ENCODE measurements at regions of chr12 and their contacts with region 1.

Region 1: DNA sequence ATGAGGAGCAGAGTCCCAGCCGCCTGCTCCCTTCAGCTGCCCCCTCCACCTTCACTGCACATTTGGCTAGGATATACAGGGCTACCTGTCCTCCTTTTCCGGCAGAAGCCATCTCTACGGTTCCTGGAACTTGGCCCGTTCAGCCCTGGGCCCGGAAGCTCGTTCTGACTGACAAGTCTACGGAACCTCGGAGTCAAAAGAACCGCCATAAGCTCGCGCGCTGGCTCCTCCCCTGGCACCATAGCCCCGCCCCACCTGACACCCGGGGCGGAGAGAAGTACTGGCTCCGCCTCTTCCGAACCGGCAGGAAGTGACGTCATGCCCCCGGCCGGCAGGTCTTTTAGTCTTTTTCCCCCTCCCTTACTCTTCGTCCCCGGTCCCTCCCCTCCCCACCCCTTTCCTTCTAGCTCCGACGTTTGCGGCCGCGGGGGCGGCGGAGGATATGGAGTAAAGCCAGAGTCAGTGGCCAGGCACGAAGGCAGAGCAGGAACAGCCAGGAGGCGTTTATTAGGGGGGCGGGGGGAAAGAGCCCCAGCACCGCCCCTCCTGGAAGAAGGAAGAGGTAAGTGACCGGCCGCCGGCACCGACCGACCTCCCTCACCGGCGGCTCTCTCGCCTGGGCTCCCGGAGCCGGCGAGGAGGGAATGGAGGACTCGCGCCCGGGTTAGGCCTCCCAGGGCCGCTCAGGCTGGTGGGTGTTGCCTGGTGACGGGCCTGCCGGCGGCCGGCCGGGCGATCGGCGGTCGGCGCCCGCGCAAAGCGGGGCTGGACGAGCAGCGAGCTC is at the starts of genes DEPDC4 and SCYL2:
- DNase-seq: peak; percentile 93 to 95
- ATAC-seq: peak; percentile 94
- H3K4me3 ChIP-seq: peak within 1 kb of the TSS; percentile 84 to 98 (median 86)
- H3K27ac ChIP-seq: peak within 1 kb of the TSS; percentile 91 to 96 (median 95)
- H3K4me1 ChIP-seq: peaks cover 24% of the 10 kb centered on the region in 2 donors
- H3K27me3 ChIP-seq: no peaks in the 10 kb centered on the region
- CTCF ChIP-seq: peak in 1 of 5 experiments; percentile 28
- POLR2A ChIP-seq: peak; percentile 61 to 76
- total RNA-seq, gene DEPDC4: not detected
- total RNA-seq, gene SCYL2: 28.9 to 44.9 (median 33.3) TPM

Region 2: GRCh38 chr12:99553459-99553858 is 713.6 kb before region 1 on chr12:
- in situ Hi-C with region 1: no loop called
- intact Hi-C with region 1: no loop called
- DNase-seq: no peak
- ATAC-seq: no peak
- H3K4me3 ChIP-seq: no peak overlapping the region
- H3K27ac ChIP-seq: no peak overlapping the region
- H3K4me1 ChIP-seq: no peaks in the 10 kb centered on the region
- H3K27me3 ChIP-seq: no peaks in the 10 kb centered on the region
- CTCF ChIP-seq: no peak
- POLR2A ChIP-seq: no peak

Region 3: DNA sequence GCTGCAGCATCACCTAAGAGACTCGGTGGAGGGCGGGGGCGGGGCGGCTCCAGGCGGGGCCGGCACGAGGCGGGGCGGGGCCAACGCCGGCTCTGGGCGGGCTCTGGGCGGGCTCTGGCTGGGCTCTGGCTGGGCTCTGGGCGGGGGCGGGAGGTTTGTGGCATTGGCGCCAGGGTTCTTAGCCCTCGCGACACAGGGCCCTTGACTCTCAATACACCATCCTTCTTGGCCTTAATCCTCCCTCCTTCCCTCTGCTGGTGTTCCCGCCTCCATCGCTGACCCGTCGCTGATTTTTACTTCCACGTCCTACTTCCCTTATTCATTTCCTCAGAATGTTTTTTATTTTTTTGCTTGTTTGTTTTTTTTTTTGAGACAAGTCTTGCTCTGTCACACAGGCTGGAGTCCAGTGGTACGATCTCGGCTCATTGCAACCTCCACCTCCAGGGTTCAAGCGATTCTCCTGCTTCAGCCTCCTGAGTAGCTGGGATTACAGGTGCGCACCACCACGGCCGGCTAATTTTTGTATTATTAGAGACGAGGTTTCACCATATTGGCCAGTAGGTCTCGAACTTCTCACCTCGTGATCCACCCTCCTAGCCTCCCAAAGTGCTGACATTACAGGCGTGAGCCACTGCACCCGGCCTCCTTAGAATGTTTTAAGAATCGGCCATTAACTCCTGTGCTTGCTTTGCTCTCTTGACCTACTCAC is 124.0 kb before region 1 on chr12 and contains the start of gene BLTP3B:
- in situ Hi-C with region 1: no loop called
- intact Hi-C with region 1: loop called (anchors 1 kb)
- DNase-seq: peak; percentile 84 to 88
- ATAC-seq: peak; percentile 77 to 80
- H3K4me3 ChIP-seq: peak within 1 kb of the TSS; percentile 95 to 97 (median 96)
- H3K27ac ChIP-seq: peak within 1 kb of the TSS; percentile 96 to 98 (median 98)
- H3K4me1 ChIP-seq: peaks cover 12 to 31% of the 10 kb centered on the region in 2 donors
- H3K27me3 ChIP-seq: no peaks in the 10 kb centered on the region
- CTCF ChIP-seq: no peak
- POLR2A ChIP-seq: no peak
- total RNA-seq, gene BLTP3B: 33.6 to 71.3 (median 42.5) TPM

Region 4: DNA sequence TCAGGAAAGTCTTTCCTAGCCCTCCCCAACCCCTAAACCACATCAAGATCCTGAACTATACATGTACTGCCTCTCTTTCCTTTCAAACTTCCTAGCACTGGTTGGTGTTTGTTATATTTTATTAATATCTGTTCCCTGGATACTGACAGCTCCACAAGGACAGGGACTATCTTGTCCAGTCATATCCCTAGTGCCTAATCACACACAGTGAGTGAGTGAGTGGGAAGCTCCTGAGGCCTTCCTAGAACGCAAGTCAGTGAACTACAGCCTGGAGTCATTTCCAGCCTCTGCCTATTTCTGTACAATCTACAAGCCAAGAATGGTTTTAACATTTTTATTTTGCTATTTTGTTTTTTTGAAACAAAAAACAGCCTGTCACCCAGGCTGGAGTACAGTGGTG is 73.9 kb before region 1 on chr12:
- in situ Hi-C with region 1: no loop called
- intact Hi-C with region 1: no loop called
- DNase-seq: no peak
- ATAC-seq: no peak
- H3K4me3 ChIP-seq: no peak overlapping the region
- H3K27ac ChIP-seq: no peak overlapping the region
- H3K4me1 ChIP-seq: no peaks in the 10 kb centered on the region
- H3K27me3 ChIP-seq: no peaks in the 10 kb centered on the region
- CTCF ChIP-seq: no peak
- POLR2A ChIP-seq: no peak

Region 5: DNA sequence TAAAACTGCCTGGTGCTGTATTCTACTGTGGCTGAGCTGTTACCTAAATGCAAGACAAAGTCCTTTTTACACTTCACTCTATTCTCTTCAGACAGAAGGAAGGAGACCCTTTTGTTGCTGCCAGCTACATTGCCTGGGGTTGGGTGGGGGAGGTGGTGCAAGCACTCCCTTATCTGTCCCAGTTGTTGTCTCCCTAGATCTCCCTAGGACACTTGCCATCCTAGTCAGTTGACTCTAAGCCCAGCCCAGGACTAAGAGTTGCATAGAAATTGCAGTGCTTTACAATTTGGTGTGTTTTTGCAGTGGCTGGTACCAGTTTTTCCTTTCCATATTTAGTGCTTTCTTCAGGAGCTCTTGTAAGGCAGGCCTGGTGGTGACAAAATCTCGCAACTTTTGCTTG is 35.1 kb after region 1 on chr12:
- in situ Hi-C with region 1: no loop called
- intact Hi-C with region 1: no loop called
- DNase-seq: no peak
- ATAC-seq: no peak
- H3K4me3 ChIP-seq: no peak overlapping the region
- H3K27ac ChIP-seq: no peak overlapping the region
- H3K4me1 ChIP-seq: no peaks in the 10 kb centered on the region
- H3K27me3 ChIP-seq: no peaks in the 10 kb centered on the region
- CTCF ChIP-seq: no peak
- POLR2A ChIP-seq: no peak

Region 6: GRCh38 chr12:100329800-100330199 is 62.8 kb after region 1 on chr12:
- in situ Hi-C with region 1: no loop called
- intact Hi-C with region 1: no loop called
- DNase-seq: no peak
- ATAC-seq: no peak
- H3K4me3 ChIP-seq: no peak overlapping the region
- H3K27ac ChIP-seq: no peak overlapping the region
- H3K4me1 ChIP-seq: peaks cover 0 to 5% of the 10 kb centered on the region in 2 donors
- H3K27me3 ChIP-seq: no peaks in the 10 kb centered on the region
- CTCF ChIP-seq: no peak
- POLR2A ChIP-seq: no peak

Region 7: GRCh38 chr12:100573292-100574186 is 306.5 kb after region 1 on chr12 and contains the start of gene GAS2L3:
- in situ Hi-C with region 1: no loop called
- intact Hi-C with region 1: loop called (anchors 10 kb)
- DNase-seq: peak; percentile 69 to 71
- ATAC-seq: peak; percentile 91 to 92
- H3K4me3 ChIP-seq: peak within 1 kb of the TSS; percentile 62 to 89 (median 72)
- H3K27ac ChIP-seq: peak within 1 kb of the TSS; percentile 54 to 69 (median 68)
- H3K4me1 ChIP-seq: peaks cover 15 to 16% of the 10 kb centered on the region in 2 donors
- H3K27me3 ChIP-seq: peaks cover 0 to 3% (median 2%) of the 10 kb centered on the region in 3 donors
- CTCF ChIP-seq: no peak
- POLR2A ChIP-seq: peak; percentile 38 to 74
- total RNA-seq, gene GAS2L3: 0.12 to 3.8 (median 0.51) TPM

Region 8: DNA sequence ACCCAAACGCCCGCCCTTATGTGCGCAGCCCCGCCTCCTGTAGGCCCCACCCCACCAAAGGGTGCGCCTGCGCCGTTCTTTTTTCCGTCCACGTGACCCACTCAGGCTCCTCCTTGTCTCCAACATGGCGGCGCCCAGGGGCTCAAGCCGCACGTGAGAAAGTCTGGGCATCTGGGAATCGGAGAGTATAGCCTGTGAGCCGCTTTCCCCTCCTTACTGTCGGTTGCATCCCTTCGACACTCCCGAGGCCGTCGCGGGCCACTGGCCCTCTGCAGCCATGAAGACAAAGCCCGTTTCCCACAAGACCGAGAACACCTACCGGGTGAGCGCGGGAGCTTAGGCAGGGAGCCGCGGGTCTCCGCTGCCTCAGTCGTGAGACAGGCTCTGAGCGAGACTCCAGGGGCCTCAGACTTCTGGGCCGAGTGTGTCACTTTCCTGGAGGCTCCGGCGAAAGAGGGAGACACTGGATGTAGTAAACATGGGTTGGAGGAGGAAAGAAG is 1013.0 kb after region 1 on chr12 and contains the start of gene UTP20:
- in situ Hi-C with region 1: no loop called
- intact Hi-C with region 1: loop called (anchors 2 kb)
- DNase-seq: peak; percentile 82 to 89
- ATAC-seq: peak; percentile 99
- H3K4me3 ChIP-seq: peak within 1 kb of the TSS; percentile 69 to 94 (median 86)
- H3K27ac ChIP-seq: peak within 1 kb of the TSS; percentile 21 to 67 (median 56)
- H3K4me1 ChIP-seq: peaks cover 7 to 13% of the 10 kb centered on the region in 2 donors
- H3K27me3 ChIP-seq: no peaks in the 10 kb centered on the region
- CTCF ChIP-seq: no peak
- POLR2A ChIP-seq: no peak
- total RNA-seq, gene UTP20: 5.9 to 15.5 (median 10.3) TPM

Measured in gastrocnemius medialis (tissue), 4 donors.